Gastrocnemius medialis (tissue), 4 donors: ENCODE measurements at regions of chr14 and their contacts with region 1.

Region 1: GRCh38 chr14:63875311-63875710 is 22.5 kb downstream of the SYNE2 start:
- DNase-seq: no peak
- ATAC-seq: peak; percentile 29 to 42
- H3K4me3 ChIP-seq: no peak overlapping the region
- H3K27ac ChIP-seq: peak overlapping the region; percentile 71 to 74 (median 72)
- H3K4me1 ChIP-seq: peaks cover 36 to 50% of the 10 kb centered on the region in 2 donors
- H3K27me3 ChIP-seq: no peaks in the 10 kb centered on the region
- CTCF ChIP-seq: no peak
- POLR2A ChIP-seq: peak in 1 of 2 donors; percentile 46

Region 2: GRCh38 chr14:63800651-63801375 is 74.5 kb before region 1 on chr14:
- in situ Hi-C with region 1: no loop called
- intact Hi-C with region 1: loop called (anchors 2 kb)
- DNase-seq: no peak
- ATAC-seq: no peak
- H3K4me3 ChIP-seq: no peak overlapping the region
- H3K27ac ChIP-seq: no peak overlapping the region
- H3K4me1 ChIP-seq: peaks cover 0 to 8% of the 10 kb centered on the region in 2 donors
- H3K27me3 ChIP-seq: no peaks in the 10 kb centered on the region
- CTCF ChIP-seq: no peak
- POLR2A ChIP-seq: no peak

Region 3: DNA sequence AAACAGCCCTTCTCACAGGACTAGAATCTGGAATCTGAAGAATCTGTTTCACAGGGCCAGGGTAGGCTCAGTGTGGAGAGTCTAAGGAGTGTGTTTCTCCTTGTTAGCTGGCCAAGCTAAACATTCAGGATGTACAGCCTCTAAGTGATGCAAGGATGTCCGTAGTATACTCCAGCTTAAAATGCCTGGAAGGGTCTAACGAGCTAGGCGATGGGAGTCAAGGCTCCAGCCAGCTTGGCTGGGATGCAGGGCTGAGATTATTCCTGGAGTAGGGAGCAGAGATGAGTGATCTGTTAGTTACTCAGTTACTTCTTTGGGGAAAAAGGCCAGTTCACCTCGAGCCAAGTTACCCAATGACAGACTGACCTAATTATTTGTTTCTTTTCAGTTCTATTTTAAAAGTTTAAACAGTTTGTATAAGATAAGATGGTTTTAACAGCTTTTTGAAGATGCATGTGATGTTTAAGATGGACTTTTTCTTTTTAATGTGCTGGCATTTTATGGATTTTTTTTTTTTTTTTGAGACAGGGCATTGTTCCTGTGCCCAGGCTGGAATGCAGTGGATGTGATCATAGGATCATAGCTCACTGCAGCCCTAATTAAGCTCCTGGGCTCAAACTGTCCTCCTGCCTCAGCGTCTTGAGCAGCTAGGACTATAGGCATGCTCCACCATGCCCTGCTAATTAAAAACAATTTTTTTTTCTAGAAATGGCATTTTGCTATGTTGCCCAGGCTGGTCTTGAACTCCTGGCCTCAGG is 18.6 kb after region 1 on chr14:
- in situ Hi-C with region 1: no loop called
- intact Hi-C with region 1: loop called (anchors 2 kb)
- DNase-seq: peak; percentile 31 to 48
- ATAC-seq: peak; percentile 81 to 86
- H3K4me3 ChIP-seq: peak overlapping the region in 1 of 4 donors; percentile 5
- H3K27ac ChIP-seq: peak overlapping the region; percentile 45 to 70 (median 57)
- H3K4me1 ChIP-seq: peaks cover 46 to 66% of the 10 kb centered on the region in 2 donors
- H3K27me3 ChIP-seq: no peaks in the 10 kb centered on the region
- CTCF ChIP-seq: no peak
- POLR2A ChIP-seq: no peak

Region 4: DNA sequence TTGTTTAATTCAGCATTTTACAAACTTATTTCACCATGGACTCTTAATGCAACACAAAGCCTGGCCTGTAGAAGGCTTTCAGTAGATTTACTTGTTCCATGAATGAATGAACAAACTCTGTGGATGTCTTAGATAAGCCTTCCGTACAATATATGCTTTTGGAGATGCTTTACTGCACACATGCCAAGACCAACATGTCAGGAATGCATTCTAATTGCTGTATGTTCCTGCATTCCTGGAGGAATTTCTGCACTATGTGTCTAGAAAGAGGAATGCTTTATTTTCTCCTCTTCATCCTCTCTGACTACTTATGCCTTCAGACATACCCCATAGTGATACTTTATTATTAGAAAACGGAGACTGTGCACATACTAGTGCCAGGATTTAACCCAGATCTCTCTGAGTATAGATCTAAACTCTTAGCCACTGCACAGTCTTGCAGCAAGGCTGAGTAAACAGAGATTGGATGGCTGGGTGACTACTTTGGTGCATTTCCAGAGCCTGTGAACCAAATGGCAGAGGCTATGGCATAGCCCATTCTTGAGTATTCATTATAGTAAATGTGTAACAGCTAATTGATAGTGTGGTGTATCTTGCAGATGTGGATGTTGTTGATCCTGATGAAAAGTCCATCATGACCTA is 85.7 kb after region 1 on chr14:
- in situ Hi-C with region 1: no loop called
- intact Hi-C with region 1: no loop called
- DNase-seq: no peak
- ATAC-seq: no peak
- H3K4me3 ChIP-seq: no peak overlapping the region
- H3K27ac ChIP-seq: no peak overlapping the region
- H3K4me1 ChIP-seq: no peaks in the 10 kb centered on the region
- H3K27me3 ChIP-seq: no peaks in the 10 kb centered on the region
- CTCF ChIP-seq: no peak
- POLR2A ChIP-seq: no peak